MCF 10A (cell line): ENCODE measurements at regions of chr9 and their contacts with region 1.

Region 1: DNA sequence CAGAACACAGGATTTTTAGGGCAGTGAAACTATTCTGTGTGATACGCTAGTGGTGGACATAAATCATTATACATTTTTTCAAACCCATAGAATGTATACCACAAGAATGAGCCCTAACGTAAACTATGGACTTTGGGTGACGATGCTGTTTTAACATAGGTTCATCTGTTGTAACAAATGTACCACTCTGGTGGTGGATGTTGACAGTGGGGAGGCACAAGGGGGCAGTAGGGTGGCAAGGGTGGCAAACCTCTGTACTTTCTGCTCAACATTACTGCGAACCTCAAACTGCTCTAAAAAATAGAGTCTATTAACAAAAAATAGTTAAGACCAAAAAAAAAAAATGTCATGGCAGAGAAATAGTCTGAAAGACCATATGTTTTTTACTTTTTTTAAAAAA is 9.1 kb upstream of the MVB12B start:
- DNase-seq: no peak
- H3K4me3 Mint-ChIP-seq: no peak overlapping the region
- H3K27ac Mint-ChIP-seq: no peak overlapping the region
- H3K4me1 Mint-ChIP-seq: no peaks in the 10 kb centered on the region
- H3K27me3 Mint-ChIP-seq: no peaks in the 10 kb centered on the region
- CTCF ChIP-seq: no peak

Region 2: GRCh38 chr9:126347911-126348760 is 30.6 kb after region 1 on chr9:
- CTCF ChIA-PET with region 1: no interaction called
- POLR2A ChIA-PET with region 1: no interaction called
- intact Hi-C with region 1: no loop called
- DNase-seq: no peak
- H3K4me3 Mint-ChIP-seq: no peak overlapping the region
- H3K27ac Mint-ChIP-seq: peak overlapping the region; percentile 59
- H3K4me1 Mint-ChIP-seq: peaks cover 12% of the 10 kb centered on the region
- H3K27me3 Mint-ChIP-seq: no peaks in the 10 kb centered on the region
- CTCF ChIP-seq: no peak

Region 3: DNA sequence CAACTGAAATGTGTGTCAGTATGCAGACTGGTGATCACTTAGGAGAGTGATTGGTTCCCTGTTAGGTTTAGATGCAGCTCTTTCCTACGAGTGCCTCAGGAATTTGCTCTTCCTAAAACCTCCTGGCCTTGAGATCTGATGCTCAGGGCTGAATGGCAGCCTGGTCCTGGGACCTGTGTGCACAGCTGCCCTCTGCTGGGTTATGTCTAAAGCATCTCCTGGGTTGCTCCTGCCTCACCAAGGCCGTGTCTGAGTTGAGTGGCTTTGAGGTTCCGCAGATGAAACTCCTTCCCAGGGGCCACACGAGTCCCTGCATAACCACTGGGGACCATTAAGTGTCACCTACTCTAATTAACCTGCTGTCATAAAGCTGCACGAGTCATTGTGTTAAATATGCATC is 68.6 kb after region 1 on chr9:
- CTCF ChIA-PET with region 1: no interaction called
- POLR2A ChIA-PET with region 1: no interaction called
- intact Hi-C with region 1: loop called (anchors 1 kb)
- DNase-seq: peak; percentile 28
- H3K4me3 Mint-ChIP-seq: no peak overlapping the region
- H3K27ac Mint-ChIP-seq: no peak overlapping the region
- H3K4me1 Mint-ChIP-seq: no peaks in the 10 kb centered on the region
- H3K27me3 Mint-ChIP-seq: no peaks in the 10 kb centered on the region
- CTCF ChIP-seq: peak; percentile 16